HEK293 (cell line): ENCODE measurements at regions of chr7 and their contacts with region 1.

Region 1: GRCh38 chr7:6516387-6516983 is 34.8 kb downstream of the GRID2IP start:
- H3K4me3 ChIP-seq: no peak overlapping the region
- H3K27ac ChIP-seq: no peak overlapping the region
- H3K4me1 ChIP-seq: no peaks in the 10 kb centered on the region
- CTCF ChIP-seq: peak; percentile 68; the same call in 1 of the 2 replicates

Region 2: GRCh38 chr7:6460303-6460702 is 56.2 kb before region 1 on chr7:
- CTCF ChIA-PET with region 1: no interaction called
- POLR2A ChIA-PET with region 1: no interaction called
- H3K4me3 ChIP-seq: no peak overlapping the region
- H3K27ac ChIP-seq: no peak overlapping the region
- H3K4me1 ChIP-seq: no peaks in the 10 kb centered on the region
- CTCF ChIP-seq: no peak

Region 3: DNA sequence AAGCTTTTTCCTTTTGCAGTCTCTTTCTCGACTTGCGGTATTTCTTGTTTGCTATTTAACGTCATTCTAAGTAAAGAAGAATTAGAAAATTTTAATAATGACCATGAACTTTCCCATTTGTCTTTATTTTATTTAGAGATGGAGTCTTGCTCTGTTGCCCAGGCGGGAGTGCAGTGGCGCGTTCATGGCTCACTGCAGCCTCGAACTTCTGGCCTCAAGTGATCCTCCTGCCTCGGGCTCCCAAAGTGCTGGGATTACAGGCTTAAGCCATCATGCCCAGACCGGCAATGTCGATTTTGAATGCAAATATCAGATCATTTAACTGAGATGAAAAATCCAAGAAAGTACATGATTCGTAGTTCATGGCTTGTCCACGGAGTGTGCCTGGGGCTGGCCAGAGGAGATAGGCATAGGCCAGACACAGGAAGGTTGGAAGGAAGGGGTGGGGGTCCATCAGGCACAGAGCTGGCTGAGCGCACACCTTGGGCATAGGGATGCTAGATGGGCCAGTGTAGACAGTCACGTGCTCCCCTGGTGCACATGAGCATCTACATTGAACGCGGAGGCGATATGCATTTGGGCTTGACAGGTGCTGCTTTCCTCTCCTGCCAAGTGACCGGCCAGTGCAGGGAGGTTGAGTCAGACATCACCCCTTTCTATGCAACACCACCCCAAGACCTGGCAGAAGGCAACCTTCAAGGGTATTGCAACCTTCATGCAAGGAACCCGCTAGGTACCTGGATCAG is 29.9 kb before region 1 on chr7:
- CTCF ChIA-PET with region 1: interaction called, 14 read pairs
- POLR2A ChIA-PET with region 1: no interaction called
- H3K4me3 ChIP-seq: no peak overlapping the region
- H3K27ac ChIP-seq: no peak overlapping the region
- H3K4me1 ChIP-seq: no peaks in the 10 kb centered on the region; the same call in 1 of the 2 replicates
- CTCF ChIP-seq: no peak

Region 4: GRCh38 chr7:6558837-6559236 is 42.4 kb after region 1 on chr7:
- CTCF ChIA-PET with region 1: interaction called, 42 read pairs
- POLR2A ChIA-PET with region 1: no interaction called
- H3K4me3 ChIP-seq: no peak overlapping the region
- H3K27ac ChIP-seq: no peak overlapping the region
- H3K4me1 ChIP-seq: no peaks in the 10 kb centered on the region
- CTCF ChIP-seq: no peak

Region 5: DNA sequence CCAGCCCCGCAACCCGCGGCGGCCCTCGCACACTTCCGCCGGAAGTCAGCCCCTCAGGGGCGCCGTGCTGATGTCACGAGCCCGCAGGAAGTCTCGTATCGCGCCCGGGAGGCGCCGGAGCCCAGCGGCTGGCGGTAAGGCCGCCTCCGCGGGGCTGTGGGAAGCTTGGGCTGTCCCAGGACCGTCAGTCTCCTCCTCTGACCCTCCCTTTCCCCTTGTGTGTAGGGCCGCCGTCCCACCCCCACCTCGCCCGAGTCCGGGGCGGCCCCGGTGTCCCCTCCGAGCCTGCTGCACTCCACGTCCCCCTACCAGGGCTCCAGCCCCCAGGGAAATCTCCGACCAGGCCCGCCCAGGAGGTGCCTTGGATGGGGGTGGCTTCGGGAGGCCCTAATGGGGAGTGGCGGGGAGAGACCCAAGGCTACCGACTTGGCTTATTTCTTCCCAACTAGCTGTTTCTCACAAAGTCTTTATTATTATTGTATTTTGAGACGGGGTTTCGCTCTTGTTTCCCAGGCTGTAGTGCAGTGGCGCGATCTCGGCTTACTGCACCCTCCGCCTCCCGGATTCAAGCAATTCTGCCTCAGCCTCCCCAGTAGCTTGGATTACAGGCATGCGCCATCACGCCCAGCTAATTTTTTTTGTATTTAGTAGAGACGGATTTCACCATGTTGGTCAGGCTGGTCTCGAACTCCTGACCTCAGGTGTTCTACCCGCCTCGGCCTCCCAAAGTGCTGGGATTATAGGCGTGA is 61.1 kb after region 1 on chr7 and contains the start of gene ZDHHC4:
- CTCF ChIA-PET with region 1: interaction called, 11 read pairs
- POLR2A ChIA-PET with region 1: interaction called, 3 read pairs
- H3K4me3 ChIP-seq: peak within 1 kb of the TSS; percentile 82
- H3K27ac ChIP-seq: peak within 1 kb of the TSS; percentile 93
- H3K4me1 ChIP-seq: no peaks in the 10 kb centered on the region; the same call in 1 of the 2 replicates
- CTCF ChIP-seq: no peak

Region 6: GRCh38 chr7:6589829-6590644 is 73.6 kb after region 1 on chr7 and contains the start of gene INTS15:
- CTCF ChIA-PET with region 1: interaction called, 28 read pairs
- POLR2A ChIA-PET with region 1: no interaction called
- H3K4me3 ChIP-seq: peak within 1 kb of the TSS; percentile 88
- H3K27ac ChIP-seq: peak within 1 kb of the TSS; percentile 89
- H3K4me1 ChIP-seq: no peaks in the 10 kb centered on the region
- CTCF ChIP-seq: peak; percentile 53